ENCODE measurements at regions of chr17 and their contacts with region 1.

Region 1: DNA sequence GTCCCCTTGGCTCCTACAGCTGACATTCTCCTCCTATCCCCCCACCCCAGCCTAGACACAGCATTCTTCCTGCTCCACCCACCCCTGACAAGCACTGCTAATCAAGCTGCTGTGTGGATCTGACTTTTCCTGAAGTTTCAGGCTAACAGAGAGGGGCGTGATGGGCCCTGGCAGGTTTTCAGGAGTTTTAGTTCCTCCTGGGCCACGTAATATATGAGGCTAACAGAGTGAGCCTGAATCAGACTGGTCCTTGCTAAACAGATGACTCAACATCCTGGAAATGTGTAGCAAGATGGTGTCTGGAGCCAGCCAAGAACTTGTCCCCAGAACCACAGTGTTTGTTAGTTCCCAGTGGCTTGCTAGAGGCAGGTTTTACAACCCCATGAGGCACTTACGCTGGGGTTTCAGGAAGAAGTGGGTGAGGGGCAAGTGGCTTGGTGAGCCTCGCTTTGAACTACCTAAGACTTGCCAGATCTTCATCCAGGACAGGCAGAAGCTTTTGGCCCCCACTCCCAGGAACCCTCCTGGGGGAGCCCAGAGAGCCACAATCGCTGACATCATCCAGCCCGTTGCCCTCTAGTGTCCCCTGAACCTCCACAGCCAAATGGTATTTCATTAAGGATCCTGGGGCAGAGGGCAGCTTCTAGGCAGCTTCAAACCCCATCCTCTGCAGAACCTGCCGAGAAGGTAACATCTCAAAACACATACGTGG is 15.9 kb downstream of the TMEM92 start:
- DNase-seq: peak; percentile 74 to 88 (median 84)
- H3K4me3 ChIP-seq: peak overlapping the region in 3 of 7 experiments; percentile 14 to 40 (median 16)
- H3K27ac ChIP-seq: peak overlapping the region in 1 of 2 experiments; percentile 62
- H3K4me1 ChIP-seq: peaks cover 0 to 23% (median 17%) of the 10 kb centered on the region in 4 experiments
- H3K27me3 ChIP-seq: no peaks in the 10 kb centered on the region

Region 2: DNA sequence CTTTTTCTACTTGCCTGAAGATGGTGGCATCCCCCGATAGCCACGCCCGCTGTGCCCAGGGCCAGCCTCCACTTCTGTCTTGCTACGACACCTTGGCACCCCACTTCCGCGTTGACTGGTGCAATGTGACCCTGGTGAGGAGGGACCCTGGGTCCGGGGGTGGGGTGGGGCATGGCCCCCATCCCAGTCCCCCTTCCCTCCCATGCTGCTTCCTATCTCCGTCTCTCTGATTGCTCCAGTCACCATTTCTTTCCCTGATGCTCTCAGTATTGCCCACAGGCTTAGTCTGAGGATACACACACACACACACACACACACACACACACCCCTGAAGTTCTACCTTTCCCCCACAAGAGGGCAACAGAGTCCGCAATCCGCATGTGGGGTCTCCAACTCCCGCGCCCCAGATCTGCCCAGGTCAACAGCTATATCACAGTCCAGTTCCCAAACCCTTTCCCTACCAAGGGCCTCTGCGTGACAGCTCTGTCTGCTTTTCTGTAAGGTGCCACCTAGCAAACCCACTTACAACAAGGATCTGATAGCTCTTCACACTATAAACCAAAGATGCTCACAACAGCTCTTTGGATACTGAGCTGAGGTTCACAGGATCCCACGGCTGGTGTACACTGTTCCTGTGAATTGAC is 120.9 kb before region 1 on chr17:
- CTCF ChIA-PET with region 1: interaction called, 46 read pairs
- POLR2A ChIA-PET with region 1: no interaction called
- DNase-seq: peak; percentile 86 to 93 (median 92)
- H3K4me3 ChIP-seq: peak overlapping the region in 2 of 7 experiments; percentile 15 to 64
- H3K27ac ChIP-seq: no peak overlapping the region
- H3K4me1 ChIP-seq: peaks cover 0 to 9% (median 5%) of the 10 kb centered on the region in 4 experiments
- H3K27me3 ChIP-seq: no peaks in the 10 kb centered on the region

Region 3: DNA sequence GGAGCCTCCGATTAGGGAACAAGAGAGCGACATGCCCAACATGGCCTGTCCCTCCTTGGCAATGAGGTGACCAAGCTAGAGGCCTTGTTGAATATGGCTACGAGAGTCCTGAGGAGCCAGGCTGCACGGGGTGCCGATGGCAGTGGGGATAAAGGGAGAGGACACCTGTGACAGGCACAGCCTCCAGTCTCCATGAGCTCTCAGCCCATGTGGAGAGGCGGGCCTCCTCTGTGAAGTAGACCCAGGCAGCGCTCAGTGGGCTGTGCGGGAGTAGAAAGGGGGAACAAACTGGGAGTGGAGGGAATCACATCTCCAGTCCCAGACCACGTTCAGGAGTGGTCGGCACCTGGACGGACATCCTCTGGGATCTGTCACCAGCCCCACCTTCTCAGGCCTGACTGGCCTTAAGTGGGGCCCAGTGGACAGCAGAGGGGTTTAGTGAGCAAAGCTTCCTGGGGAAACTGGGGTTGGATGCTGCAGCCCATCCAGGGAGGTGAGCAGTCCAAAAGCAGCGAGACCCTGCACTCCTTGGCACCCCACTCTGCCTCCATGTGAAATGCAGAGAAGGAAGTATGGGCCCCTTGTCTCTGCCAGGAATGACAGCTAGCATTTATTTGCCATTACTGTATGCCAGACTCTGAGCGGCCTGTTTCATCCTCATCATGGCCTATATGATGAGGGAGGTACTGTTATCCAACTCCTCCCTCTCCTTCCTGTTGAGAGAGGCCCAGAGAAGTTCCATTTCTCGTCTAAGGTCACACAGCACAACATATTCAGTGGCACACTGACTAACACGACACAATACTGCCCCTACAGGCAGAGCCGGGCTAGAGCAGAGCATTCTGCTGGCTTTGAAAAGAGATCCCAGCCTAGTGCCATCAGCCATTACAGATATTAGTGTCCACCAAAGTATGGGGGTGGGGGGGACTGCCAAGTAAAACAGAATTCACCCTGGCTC is 20.4 kb before region 1 on chr17:
- CTCF ChIA-PET with region 1: interaction called, 75 read pairs
- POLR2A ChIA-PET with region 1: no interaction called
- DNase-seq: peak; percentile 53 to 74 (median 58)
- H3K4me3 ChIP-seq: no peak overlapping the region
- H3K27ac ChIP-seq: no peak overlapping the region
- H3K4me1 ChIP-seq: peaks cover 0 to 67% (median 53%) of the 10 kb centered on the region in 4 experiments
- H3K27me3 ChIP-seq: peaks cover 0 to 6% (median 0%) of the 10 kb centered on the region in 5 experiments

Region 4: DNA sequence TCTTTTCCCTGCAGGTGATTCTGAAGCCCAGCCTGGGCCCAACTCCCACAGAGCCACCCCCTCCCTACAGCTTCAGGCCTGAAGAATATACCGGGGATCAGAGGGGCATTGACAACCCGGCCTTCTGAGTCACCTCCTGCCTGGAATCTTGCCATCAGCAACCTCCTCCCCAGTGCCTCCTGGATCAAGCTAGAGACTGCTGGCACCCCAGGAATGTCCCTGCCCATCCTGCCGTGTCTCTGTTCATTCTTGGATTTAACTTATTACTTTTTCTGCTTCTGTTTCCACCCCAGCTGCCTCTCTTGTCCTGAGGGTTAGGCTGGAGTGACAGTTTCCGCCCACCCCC is 11.0 kb before region 1 on chr17:
- CTCF ChIA-PET with region 1: interaction called, 75 read pairs
- POLR2A ChIA-PET with region 1: no interaction called
- DNase-seq: no peak
- H3K4me3 ChIP-seq: no peak overlapping the region
- H3K27ac ChIP-seq: no peak overlapping the region
- H3K4me1 ChIP-seq: peaks cover 0 to 30% (median 20%) of the 10 kb centered on the region in 4 experiments
- H3K27me3 ChIP-seq: no peaks in the 10 kb centered on the region